Activated T-helper 2 cell treated with anti-CD3 and anti-CD28 coated beads, Interferon-gamma antibody, Interleukin-2, Interleukin-4, amounts not matched to agents 10 μg/mL and 5 μg/mL and 100 μg/mL, durations not matched to agents 14 hours and 24 hours and 36 hours (primary cell): ENCODE measurements at regions of chr18 and their contacts with region 1.

Region 1: DNA sequence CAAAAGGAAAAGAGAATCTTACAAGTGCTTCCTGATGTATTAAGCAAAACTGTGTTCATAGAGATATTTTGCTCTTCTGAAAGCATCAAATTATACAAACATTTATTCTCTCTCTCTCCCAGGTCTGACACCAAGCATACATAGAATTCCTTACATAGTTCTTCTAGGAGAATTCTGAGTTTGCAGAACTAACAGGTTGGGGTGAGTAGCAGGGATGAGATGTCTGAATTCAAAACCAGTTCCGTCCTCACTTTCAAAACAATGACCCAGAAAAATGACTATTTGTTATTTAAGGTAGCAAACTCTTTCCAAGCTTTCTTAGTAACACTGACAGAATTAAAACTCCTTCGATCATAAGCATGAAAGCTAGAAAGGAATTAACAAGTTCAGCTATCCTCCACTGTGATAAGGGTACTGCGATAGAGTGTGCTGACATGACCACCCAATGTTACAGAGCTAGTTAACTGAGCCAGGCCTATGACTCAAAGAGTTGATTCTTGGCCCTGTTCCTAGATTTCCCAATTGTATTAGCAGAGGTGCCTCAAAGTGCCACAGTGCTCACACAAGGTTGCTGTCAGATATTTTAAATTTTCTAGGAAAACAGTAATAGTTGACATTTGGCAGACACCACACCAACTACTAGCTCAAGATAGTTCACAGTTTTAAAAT is 85.8 kb upstream of the SETBP1 start:
- DNase-seq: no peak
- H3K4me3 Mint-ChIP-seq: no peak overlapping the region
- H3K27ac Mint-ChIP-seq: no peak overlapping the region
- H3K4me1 Mint-ChIP-seq: peaks cover 7% of the 10 kb centered on the region
- H3K27me3 Mint-ChIP-seq: peaks cover 20% of the 10 kb centered on the region

Region 2: GRCh38 chr18:44507729-44508325 is 87.1 kb before region 1 on chr18:
- intact Hi-C with region 1: loop called (anchors 1 kb)
- DNase-seq: no peak
- H3K4me3 Mint-ChIP-seq: no peak overlapping the region
- H3K27ac Mint-ChIP-seq: no peak overlapping the region
- H3K4me1 Mint-ChIP-seq: no peaks in the 10 kb centered on the region
- H3K27me3 Mint-ChIP-seq: no peaks in the 10 kb centered on the region

Region 3: GRCh38 chr18:44537521-44537920 is 57.4 kb before region 1 on chr18:
- intact Hi-C with region 1: no loop called
- DNase-seq: no peak
- H3K4me3 Mint-ChIP-seq: no peak overlapping the region
- H3K27ac Mint-ChIP-seq: no peak overlapping the region
- H3K4me1 Mint-ChIP-seq: no peaks in the 10 kb centered on the region
- H3K27me3 Mint-ChIP-seq: peaks cover 1% of the 10 kb centered on the region

Region 4: DNA sequence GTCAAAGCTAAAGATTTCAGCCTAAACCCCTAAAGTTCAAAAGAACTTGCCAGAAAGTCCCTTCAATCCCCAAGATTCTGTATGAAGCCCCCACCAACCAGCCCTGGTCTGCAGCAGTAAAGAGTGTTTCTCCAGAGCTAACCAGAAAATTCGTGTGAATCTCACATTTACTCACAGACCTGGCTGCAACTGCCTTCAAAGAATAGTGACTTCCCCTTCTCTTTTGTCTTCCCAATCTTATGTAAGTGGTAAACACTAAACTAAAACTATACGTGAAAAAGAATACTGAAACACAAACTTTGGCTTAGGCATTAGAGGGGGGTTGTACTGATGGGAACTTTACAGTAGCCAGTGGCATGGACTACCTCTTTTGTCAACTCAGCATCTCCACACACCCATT is 35.2 kb after region 1 on chr18:
- intact Hi-C with region 1: loop called (anchors 2 kb)
- DNase-seq: no peak
- H3K4me3 Mint-ChIP-seq: no peak overlapping the region
- H3K27ac Mint-ChIP-seq: no peak overlapping the region
- H3K4me1 Mint-ChIP-seq: peaks cover 8% of the 10 kb centered on the region
- H3K27me3 Mint-ChIP-seq: peaks cover 1% of the 10 kb centered on the region

Region 5: DNA sequence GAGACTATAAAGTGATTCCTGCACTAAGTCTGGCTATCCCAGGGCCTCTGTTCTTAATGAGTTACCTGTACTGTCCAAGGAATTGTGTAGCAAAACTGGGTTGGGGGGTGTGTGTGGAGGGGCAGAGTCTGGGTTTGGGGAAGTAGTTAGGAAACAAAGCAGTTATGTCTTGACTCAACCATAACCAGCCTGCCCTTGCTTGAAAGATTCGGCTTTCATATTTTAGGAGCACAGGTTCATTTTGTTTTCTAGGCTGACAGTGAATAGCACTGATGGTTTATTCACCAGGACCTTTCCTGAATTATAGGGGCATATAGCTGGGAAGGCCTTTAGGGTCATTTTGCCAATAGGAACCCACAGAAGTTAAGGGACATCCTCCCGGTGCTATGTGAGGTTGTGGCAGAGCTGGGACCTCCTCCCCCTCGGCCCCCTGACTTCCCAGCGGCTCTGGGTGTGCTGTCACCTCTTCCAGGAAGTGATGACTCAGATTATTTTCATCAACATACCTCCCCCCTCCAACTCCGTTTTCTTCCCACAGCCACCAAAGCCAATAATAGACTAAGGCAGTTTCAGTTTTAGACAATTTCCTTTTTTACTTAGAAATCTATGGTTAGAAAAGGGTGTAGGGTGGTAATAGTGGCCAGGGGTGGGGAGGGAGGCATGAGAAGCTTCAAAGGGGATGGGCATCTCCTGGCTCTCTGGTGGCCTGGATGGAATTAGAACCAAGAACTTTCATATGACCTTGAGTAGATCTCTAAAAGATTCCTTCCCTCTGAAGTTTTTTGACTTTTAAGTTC is 130.6 kb after region 1 on chr18:
- intact Hi-C with region 1: loop called (anchors 5 kb)
- DNase-seq: peak; percentile 66
- H3K4me3 Mint-ChIP-seq: peak overlapping the region; percentile 19
- H3K27ac Mint-ChIP-seq: peak overlapping the region; percentile 83
- H3K4me1 Mint-ChIP-seq: peaks cover 90% of the 10 kb centered on the region
- H3K27me3 Mint-ChIP-seq: no peaks in the 10 kb centered on the region

Region 6: DNA sequence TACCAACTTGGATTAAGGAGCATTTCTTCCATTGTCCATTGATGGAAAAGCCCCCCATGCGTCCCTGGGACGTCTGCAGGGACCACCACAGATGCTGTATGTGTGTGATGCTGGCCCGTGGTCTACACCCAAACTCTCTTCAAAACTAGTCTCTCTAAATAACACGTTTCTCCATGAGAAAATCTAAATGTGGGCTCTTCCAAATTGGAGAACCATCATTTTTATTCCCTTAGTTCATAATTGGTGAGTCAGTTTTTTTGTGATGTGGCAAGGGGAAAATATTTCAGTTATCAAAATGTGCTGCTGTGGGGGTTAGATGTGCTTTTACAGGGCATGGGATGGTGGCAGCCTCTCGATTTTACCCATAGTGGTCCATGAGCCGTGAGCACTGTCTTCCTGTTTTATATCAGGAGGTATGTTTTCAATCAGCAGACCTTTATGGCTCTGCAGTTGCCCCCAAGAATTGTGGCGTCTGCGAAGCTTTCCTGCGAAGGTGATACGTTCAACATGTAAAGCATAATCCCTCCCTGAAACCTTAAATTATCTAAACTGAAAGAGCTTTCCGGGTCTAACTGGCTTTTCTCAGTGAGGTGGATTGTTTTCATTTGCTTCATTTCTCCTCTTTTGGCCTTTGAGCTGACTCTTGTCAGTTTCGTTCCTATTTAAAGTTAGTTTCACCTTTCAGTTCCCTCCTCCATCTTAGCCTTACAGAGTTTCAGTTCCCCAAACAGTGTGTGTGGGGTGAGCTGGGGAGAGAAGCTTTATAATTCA is 164.1 kb after region 1 on chr18:
- intact Hi-C with region 1: no loop called
- DNase-seq: peak; percentile 27
- H3K4me3 Mint-ChIP-seq: peak overlapping the region; percentile 53
- H3K27ac Mint-ChIP-seq: peak overlapping the region; percentile 97
- H3K4me1 Mint-ChIP-seq: peaks cover 36% of the 10 kb centered on the region
- H3K27me3 Mint-ChIP-seq: no peaks in the 10 kb centered on the region

Region 7: GRCh38 chr18:44895176-44895798 is 300.4 kb after region 1 on chr18:
- intact Hi-C with region 1: loop called (anchors 1 kb)
- DNase-seq: peak; percentile 10
- H3K4me3 Mint-ChIP-seq: no peak overlapping the region
- H3K27ac Mint-ChIP-seq: peak overlapping the region; percentile 20
- H3K4me1 Mint-ChIP-seq: peaks cover 49% of the 10 kb centered on the region
- H3K27me3 Mint-ChIP-seq: no peaks in the 10 kb centered on the region